ENCODE measurements at regions of chr12 and their contacts with region 1.

Region 1: DNA sequence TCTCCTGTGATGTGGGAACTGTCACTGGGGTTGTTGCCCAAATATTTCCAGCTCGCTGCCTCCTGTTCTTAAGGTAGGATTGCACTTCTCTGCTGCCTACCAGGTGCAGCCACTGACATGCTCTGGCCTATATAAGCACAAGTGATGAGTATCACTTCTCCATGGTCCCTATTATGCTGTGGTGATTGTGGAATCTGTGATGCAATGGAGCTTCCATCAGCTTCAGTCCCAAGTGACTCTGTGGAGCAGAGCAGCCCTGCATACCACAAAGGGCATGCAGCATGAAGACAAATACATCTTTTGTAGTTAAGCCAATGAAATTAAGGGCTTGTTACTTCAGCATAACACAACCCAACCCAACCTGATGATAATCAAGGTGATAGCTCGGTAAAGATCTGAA is 43.5 kb downstream of the CKAP4 start:
- DNase-seq: peak in 1 of 2 donors; percentile 27
- H3K4me3 ChIP-seq: no peak overlapping the region
- H3K27ac ChIP-seq: no peak overlapping the region
- H3K4me1 ChIP-seq: no peaks in the 10 kb centered on the region
- H3K27me3 ChIP-seq: no peaks in the 10 kb centered on the region
- CTCF ChIP-seq: no peak
- POLR2A ChIP-seq: no peak

Region 2: DNA sequence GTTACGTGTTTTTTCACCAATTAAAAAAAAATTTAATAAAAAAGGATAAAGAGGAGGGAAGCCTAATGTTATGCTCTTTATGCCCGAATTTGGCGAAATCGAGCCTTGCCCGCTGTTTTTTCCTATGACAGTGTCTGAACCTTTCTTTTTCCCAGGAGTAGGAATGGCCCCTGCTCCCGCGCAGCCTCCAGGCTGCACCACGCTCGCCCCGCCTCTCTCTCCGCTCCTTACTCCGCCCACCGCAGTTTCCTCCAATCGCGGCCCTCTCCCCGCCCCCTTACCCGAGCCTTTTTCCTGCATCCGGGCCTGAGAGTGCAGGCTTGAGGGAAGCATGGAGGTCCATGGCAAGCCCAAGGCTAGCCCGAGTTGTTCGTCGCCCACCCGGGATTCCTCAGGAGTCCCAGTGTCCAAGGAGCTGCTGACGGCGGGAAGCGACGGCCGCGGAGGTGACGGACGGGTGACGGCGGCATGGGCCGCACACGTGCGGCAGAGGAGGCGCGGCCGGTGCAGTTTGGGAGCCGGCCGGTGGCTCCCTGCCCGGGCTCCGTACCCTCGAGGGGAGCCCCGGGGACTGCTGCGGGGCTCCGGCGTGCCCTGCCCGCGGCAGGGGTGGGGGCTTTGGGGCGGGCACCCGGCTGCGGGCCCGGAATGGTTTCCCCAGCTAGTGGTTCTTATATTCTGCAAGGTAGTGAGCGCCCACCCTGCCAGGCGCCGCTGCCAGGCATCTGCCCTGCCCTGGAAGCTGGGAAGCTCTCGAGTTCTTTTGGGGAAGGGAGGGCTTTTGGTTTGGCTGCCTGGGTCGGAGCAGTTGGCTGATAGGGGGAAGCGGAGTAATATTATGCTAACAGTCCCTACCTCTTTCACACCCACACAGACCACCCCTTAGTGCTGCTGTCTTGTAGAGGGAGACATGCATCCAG is 1218.0 kb before region 1 on chr12 and contains the start of gene NOPCHAP1:
- intact Hi-C with region 1: loop called (anchors 5 kb)
- DNase-seq: peak in 1 of 2 donors; percentile 90
- H3K4me3 ChIP-seq: peak within 1 kb of the TSS; percentile 64 to 88
- H3K27ac ChIP-seq: peak within 1 kb of the TSS; percentile 54
- H3K4me1 ChIP-seq: peaks cover 22% of the 10 kb centered on the region
- H3K27me3 ChIP-seq: no peaks in the 10 kb centered on the region
- CTCF ChIP-seq: no peak
- POLR2A ChIP-seq: peak in 1 of 2 donors; percentile 38
- total RNA-seq, gene NOPCHAP1: 13.3 TPM

Region 3: GRCh38 chr12:106282457-106283097 is 78.3 kb after region 1 on chr12:
- intact Hi-C with region 1: no loop called
- DNase-seq: no peak
- H3K4me3 ChIP-seq: no peak overlapping the region
- H3K27ac ChIP-seq: no peak overlapping the region
- H3K4me1 ChIP-seq: no peaks in the 10 kb centered on the region
- H3K27me3 ChIP-seq: no peaks in the 10 kb centered on the region
- CTCF ChIP-seq: peak; percentile 36 to 73 (median 70)
- POLR2A ChIP-seq: no peak